Activated T-helper 2 cell treated with anti-CD3 and anti-CD28 coated beads, Interferon-gamma antibody, Interleukin-2, Interleukin-4, amounts not matched to agents 10 μg/mL and 5 μg/mL and 100 μg/mL, durations not matched to agents 14 hours and 24 hours and 36 hours (primary cell): ENCODE measurements at regions of chr9 and their contacts with region 1.

Region 1: GRCh38 chr9:137223078-137223970 is 1.3 kb upstream of the RNF208 start:
- DNase-seq: peak; percentile 99
- H3K4me3 Mint-ChIP-seq: peak overlapping the region; percentile 82
- H3K27ac Mint-ChIP-seq: peak overlapping the region; percentile 73
- H3K4me1 Mint-ChIP-seq: peaks cover 7% of the 10 kb centered on the region
- H3K27me3 Mint-ChIP-seq: no peaks in the 10 kb centered on the region

Region 2: DNA sequence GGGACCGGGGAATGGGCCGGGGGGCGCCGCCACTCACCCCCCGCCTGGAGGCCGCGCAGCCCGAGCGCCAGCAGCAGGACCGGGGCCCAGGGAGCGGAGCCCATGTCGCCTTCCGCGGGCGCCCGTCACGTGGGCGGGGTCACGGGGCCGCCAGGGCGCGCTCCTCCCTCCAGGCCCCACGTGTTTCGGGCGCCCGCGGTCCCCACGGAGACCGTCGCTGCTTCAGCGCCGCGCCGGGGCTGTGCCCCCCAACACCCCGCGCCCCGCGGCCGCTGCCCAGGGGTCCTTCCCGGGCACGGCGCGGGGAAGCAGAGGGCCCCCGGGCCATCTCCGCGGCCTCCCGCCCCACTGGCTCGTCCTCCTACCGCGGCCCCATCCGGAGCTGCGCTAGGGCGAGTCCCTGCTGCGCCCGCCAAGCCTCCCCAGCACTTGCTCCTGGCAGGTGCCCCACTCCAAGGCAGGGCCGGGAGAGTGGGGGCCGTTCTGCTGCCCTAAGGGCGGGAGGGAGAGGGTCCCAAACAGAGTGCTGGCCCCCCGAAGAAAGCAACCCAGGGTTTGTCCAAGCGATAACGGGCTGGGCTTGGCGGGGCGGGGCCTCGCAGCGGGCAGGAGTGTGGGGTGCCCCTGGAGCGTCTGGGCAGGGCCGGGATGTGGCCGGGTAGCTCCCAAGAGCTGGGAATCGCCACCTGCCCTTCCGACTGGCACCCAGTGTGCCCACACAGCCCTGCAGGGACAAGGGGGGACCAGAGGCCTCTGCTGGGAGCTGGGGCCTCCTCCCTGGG is 108.5 kb before region 1 on chr9 and contains the start of gene DPP7:
- intact Hi-C with region 1: loop called (anchors 1 kb)
- DNase-seq: peak; percentile 78
- H3K4me3 Mint-ChIP-seq: peak within 1 kb of the TSS; percentile 74
- H3K27ac Mint-ChIP-seq: peak within 1 kb of the TSS; percentile 60
- H3K4me1 Mint-ChIP-seq: peaks cover 5% of the 10 kb centered on the region
- H3K27me3 Mint-ChIP-seq: no peaks in the 10 kb centered on the region
- total RNA-seq, gene DPP7: 318 and 321 TPM in 2 replicates

Region 3: DNA sequence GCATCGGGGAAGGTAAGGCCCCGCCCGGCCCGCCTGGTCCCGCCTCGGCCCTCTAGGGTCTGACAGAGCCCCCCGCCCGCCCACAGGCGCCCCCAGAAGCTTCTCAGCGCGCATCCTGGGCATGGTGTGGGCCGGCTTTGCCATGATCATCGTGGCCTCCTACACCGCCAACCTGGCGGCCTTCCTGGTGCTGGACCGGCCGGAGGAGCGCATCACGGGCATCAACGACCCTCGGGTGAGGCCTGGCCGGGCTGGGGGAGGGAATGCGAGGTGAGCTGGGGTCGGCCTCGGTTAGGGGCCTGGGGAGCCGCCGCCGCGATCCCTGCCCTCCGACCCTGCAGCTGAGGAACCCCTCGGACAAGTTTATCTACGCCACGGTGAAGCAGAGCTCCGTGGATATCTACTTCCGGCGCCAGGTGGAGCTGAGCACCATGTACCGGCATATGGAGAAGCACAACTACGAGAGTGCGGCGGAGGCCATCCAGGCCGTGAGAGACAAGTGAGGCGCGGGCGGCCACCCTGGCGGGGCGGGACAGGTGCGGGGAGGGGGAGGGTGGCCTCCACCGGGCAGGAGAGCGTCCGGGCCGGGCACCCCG is 60.7 kb before region 1 on chr9:
- intact Hi-C with region 1: no loop called
- DNase-seq: no peak
- H3K4me3 Mint-ChIP-seq: no peak overlapping the region
- H3K27ac Mint-ChIP-seq: no peak overlapping the region
- H3K4me1 Mint-ChIP-seq: no peaks in the 10 kb centered on the region
- H3K27me3 Mint-ChIP-seq: peaks cover 35% of the 10 kb centered on the region

Region 4: DNA sequence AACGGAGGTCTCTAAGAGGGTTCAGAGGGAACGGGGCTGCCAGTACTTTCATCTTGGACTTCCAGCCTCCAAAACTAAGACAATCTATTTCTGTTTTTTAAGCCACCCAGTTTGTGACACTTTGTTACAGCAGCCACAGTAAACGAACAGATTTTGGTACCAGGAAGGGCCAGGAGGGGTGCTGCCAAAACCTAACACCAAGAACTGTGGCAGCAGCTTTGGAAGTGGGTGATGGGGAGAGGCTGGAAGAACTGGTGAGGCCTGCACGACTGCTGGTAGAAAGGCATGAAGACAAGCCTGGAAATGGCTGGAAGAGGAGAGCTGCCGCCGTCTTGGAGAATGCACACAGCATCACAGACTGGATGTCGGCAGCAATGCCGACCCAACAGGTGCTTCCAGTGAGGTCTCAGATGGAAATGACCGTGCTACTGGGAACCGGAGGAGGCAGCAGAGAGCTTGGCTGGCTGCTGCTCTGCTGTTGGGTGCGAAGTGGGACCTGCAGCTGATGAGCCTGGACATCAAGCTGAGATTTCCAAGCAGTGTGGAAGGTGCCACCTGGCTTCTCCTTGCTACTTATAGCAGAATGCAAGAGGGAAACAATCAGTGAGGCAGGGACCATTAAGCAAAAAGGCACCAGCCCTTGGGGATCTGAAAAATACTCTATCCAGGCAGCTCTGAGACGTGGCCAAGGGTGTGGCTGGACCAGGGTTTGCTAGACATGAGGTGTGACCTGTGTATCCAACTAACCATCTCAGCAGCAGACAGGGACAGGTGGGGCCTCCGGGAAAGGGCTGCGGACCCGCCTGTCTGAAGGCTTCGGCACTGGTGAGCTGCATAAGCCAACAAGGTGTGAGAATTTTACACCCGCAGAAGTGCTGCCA is 46.8 kb before region 1 on chr9:
- intact Hi-C with region 1: no loop called
- DNase-seq: no peak
- H3K4me3 Mint-ChIP-seq: no peak overlapping the region
- H3K27ac Mint-ChIP-seq: no peak overlapping the region
- H3K4me1 Mint-ChIP-seq: no peaks in the 10 kb centered on the region
- H3K27me3 Mint-ChIP-seq: peaks cover 5% of the 10 kb centered on the region

Region 5: GRCh38 chr9:137188490-137189296 is 34.6 kb before region 1 on chr9 and contains the starts of genes ANAPC2 and SSNA1:
- intact Hi-C with region 1: loop called (anchors 1 kb)
- DNase-seq: peak; percentile 93
- H3K4me3 Mint-ChIP-seq: peak within 1 kb of the TSS; percentile 94
- H3K27ac Mint-ChIP-seq: peak within 1 kb of the TSS; percentile 89
- H3K4me1 Mint-ChIP-seq: peaks cover 25% of the 10 kb centered on the region
- H3K27me3 Mint-ChIP-seq: no peaks in the 10 kb centered on the region
- total RNA-seq, gene ANAPC2: 52.3 and 58.5 TPM in 2 replicates
- total RNA-seq, gene SSNA1: 91.6 and 91.8 TPM in 2 replicates

Region 6: DNA sequence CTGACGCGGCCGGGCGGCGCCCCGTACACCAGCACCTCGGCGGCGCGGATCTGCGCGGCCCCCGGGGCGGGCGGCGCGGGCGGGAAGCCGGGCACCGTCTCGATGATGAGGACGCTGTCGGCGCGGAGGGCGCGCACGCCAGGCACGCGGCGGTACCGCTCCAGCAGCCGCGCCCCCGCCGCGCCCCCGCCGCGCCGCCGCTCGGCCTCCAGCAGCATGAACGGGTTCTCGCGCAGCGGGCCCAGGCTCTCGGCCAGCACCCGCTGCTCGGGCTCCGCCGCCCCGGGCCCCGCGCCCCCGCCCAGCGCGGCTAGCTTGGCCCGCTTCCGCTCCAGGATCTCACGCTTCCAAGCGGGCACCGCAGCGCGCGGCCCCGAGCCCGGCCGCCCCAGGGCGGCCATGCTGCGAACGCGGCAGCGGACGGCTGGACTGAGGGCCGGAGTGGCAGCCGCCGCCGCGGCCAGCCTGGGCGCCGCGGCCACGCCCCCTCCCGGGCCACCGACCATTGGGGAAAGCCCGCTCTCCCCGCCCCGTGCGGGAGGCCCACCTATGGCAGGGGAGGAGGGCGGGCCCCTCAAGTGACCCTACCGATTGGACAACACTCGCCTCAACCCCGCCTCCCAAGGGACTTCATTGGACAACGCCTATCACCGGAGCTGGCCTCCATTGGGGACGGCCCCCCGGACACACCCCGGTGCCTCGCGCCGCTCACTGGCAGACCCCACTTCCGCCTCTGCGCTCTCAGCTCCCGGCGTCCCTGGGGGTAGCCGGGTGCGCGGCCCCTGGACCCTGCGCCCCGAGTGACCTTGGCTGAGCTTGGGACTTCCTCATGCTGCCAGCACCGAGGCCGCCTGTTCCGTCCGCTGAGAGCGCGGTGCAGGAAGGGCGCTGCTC is 22.8 kb before region 1 on chr9 and contains the start of gene TPRN:
- intact Hi-C with region 1: loop called (anchors 1 kb)
- DNase-seq: peak; percentile 99
- H3K4me3 Mint-ChIP-seq: peak within 1 kb of the TSS; percentile 83
- H3K27ac Mint-ChIP-seq: peak within 1 kb of the TSS; percentile 69
- H3K4me1 Mint-ChIP-seq: peaks cover 20% of the 10 kb centered on the region
- H3K27me3 Mint-ChIP-seq: no peaks in the 10 kb centered on the region
- total RNA-seq, gene TPRN: 16.4 and 18.2 TPM in 2 replicates